ENCODE measurements at regions of chr9 and their contacts with region 1.

Region 1: GRCh38 chr9:130770679-130771442 is 64.2 kb upstream of the ABL1 start:
- DNase-seq: peak; percentile 7 to 46
- H3K4me3 ChIP-seq: no peak overlapping the region
- H3K27ac ChIP-seq: no peak overlapping the region
- H3K4me1 ChIP-seq: no peaks in the 10 kb centered on the region
- H3K27me3 ChIP-seq: no peaks in the 10 kb centered on the region
- CTCF ChIP-seq: peak; percentile 80

Region 2: DNA sequence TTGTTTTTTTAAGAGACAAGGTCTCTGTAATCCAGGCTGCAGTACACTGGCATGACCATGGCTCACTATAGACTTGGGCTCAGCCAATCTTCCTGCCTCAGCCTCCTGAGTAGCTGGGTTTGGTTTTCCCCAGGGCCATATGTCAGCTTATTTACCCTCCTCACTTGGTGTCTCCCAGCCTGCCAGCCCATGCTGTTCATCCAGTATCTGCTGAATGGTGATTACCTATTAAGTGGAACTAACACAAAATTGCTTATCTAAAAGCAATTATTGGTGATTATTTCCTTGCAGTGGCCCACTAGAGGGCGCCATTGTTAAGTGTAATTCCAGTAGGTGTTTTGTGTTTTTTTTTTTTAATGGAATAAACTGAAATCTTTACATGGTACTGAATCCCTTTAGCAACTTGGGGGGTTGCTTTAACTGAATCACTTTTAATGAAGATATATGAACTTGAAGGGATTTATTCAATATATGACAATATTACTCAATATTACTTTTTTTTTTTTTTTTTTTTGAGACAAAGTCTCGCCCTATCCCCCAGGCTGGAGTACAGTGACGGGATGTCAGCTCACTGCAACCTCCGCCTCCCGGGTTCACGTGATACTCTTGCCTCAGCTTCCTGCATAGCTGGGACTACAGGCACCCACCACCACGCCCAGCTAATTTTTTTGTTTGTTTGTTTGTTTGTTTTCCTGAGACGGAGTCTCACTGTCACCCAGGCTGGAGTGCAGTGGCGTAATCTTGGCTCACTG is 63.5 kb before region 1 on chr9:
- CTCF ChIA-PET with region 1: interaction called, 3 read pairs
- POLR2A ChIA-PET with region 1: no interaction called
- intact Hi-C with region 1: loop called (anchors 5 kb)
- DNase-seq: peak; percentile 59 to 61
- H3K4me3 ChIP-seq: no peak overlapping the region
- H3K27ac ChIP-seq: no peak overlapping the region
- H3K4me1 ChIP-seq: no peaks in the 10 kb centered on the region
- H3K27me3 ChIP-seq: no peaks in the 10 kb centered on the region
- CTCF ChIP-seq: peak; percentile 94

Region 3: DNA sequence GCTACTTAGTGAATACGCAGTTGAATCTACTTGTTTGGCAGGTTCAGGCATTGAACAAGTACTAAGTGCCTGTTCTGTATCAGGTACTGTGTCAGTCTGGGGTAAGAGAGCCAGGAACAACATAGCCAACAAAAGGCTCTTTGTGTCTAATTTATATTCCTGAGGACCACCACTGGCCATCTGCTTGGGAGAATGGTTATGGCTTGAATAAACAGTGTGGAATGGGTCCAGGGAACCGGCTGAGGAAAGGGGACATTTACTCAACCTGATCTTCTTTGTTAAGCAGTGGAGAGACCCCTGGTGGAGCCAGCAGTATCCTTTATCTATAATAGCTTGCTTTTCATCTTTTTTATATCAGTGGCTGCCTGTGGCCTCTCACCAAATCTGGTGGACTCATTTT is 38.7 kb before region 1 on chr9:
- CTCF ChIA-PET with region 1: interaction called, 14 read pairs
- POLR2A ChIA-PET with region 1: no interaction called
- intact Hi-C with region 1: no loop called
- DNase-seq: no peak
- H3K4me3 ChIP-seq: no peak overlapping the region
- H3K27ac ChIP-seq: no peak overlapping the region
- H3K4me1 ChIP-seq: peaks cover 23% of the 10 kb centered on the region
- H3K27me3 ChIP-seq: no peaks in the 10 kb centered on the region
- CTCF ChIP-seq: no peak

Region 4: GRCh38 chr9:130857864-130858738 is 87.2 kb after region 1 on chr9:
- CTCF ChIA-PET with region 1: interaction called, 12 read pairs
- POLR2A ChIA-PET with region 1: no interaction called
- intact Hi-C with region 1: loop called (anchors 1 kb)
- DNase-seq: no peak
- H3K4me3 ChIP-seq: no peak overlapping the region
- H3K27ac ChIP-seq: no peak overlapping the region
- H3K4me1 ChIP-seq: no peaks in the 10 kb centered on the region
- H3K27me3 ChIP-seq: no peaks in the 10 kb centered on the region
- CTCF ChIP-seq: no peak